Breast epithelium (tissue), 4 donors: ENCODE measurements at regions of chr12 and their contacts with region 1.

Region 1: DNA sequence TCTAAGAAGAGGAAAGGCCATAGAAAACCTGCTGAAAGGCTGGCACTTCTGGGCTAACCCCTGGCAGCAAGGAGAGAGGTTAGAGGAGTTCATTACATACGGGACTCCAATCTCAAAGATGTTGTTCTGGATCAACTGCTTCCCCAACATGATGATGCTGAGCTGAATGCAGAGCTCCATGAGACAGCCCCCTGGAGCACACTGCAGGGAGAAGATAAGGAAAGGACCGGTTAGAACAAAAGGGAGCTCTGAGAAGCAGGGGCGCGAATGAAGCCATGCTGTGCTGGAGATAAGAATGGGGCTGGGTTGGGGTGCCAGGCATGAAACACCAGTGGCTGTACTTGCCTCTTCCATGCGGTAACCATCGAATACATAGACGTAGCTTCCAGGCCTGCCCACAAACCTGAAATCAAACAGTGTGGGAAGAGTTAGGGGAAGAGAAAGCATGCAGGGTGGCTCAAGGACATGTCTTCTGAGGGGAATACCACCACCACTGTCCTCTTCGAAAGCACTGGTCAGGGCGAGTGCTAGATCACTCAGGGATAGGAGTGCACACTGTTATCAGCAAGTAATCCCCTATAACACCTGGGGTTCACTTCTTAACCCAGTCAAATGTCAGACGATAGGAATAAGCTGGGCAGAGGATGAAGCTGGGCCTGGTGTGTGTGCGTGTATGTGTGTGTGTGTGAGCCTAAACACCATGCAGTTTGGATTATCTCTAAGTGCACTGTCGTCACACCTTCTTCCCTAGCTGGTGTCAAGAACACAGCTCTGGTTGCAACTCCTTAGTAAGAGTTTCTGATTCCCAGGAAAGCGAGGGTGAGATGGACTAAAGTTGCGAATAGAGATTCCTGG is 180.9 kb downstream of the NTF3 start:
- DNase-seq: no peak
- H3K4me3 ChIP-seq: no peak overlapping the region
- H3K27ac ChIP-seq: no peak overlapping the region
- H3K4me1 ChIP-seq: no peaks in the 10 kb centered on the region
- H3K27me3 ChIP-seq: no peaks in the 10 kb centered on the region
- CTCF ChIP-seq: no peak
- POLR2A ChIP-seq: no peak

Region 2: DNA sequence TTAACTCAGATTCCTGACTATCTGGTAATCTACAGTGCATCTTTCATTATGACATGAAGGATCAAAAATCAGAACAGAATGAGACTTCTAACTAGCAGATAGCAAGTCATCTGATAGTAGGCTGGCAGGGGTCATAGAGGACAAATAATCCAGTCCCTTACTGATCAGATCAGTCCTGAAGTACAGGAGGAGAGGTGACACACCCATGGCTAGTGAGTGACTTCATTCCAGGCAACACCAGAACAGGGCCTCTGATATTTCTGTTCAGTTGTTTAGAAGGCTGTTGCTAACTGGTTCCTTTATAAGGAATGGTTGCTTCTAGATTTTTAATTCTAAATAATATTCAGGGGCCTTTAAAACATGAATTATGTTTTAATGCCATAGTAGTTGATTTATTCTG is 41.2 kb after region 1 on chr12:
- intact Hi-C with region 1: loop called (anchors 2 kb)
- DNase-seq: no peak
- H3K4me3 ChIP-seq: no peak overlapping the region
- H3K27ac ChIP-seq: no peak overlapping the region
- H3K4me1 ChIP-seq: no peaks in the 10 kb centered on the region
- H3K27me3 ChIP-seq: peaks cover 0 to 2% of the 10 kb centered on the region in 2 donors
- CTCF ChIP-seq: no peak
- POLR2A ChIP-seq: no peak